PC-3 (cell line): ENCODE measurements at regions of chr2 and their contacts with region 1.

Region 1: GRCh38 chr2:138922973-138923563 is 142.9 kb upstream of the NXPH2 start:
- DNase-seq: peak; percentile 70
- ATAC-seq: peak; percentile 53
- H3K4me3 ChIP-seq: no peak overlapping the region
- H3K27ac ChIP-seq: no peak overlapping the region
- H3K4me1 ChIP-seq: peaks cover 11% of the 10 kb centered on the region; the same call in 1 of the 2 replicates
- H3K27me3 ChIP-seq: no peaks in the 10 kb centered on the region
- CTCF ChIP-seq: peak; percentile 84

Region 2: DNA sequence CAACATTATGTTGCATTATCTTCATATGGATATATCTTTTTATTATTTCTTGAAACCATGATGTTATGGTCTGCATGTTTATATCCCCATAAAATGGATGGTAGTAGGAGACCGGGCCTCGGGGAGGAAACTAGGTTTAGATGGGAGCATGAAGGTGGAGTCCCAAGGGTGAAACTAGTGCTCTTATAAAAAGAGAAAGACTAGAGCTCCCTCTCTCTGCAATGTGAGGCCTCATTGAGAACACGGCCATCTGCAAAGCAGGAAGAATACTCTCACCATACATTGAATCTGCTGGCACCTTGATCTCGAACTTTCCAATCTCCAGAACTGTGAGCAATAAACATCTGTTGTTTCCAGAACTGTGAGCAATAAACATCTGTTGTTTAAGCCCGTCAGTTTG is 206.9 kb before region 1 on chr2:
- CTCF ChIA-PET with region 1: no interaction called
- POLR2A ChIA-PET with region 1: no interaction called
- intact Hi-C with region 1: no loop called
- DNase-seq: peak; percentile 43
- ATAC-seq: peak; percentile 74
- H3K4me3 ChIP-seq: no peak overlapping the region
- H3K27ac ChIP-seq: no peak overlapping the region
- H3K4me1 ChIP-seq: peaks cover 10% of the 10 kb centered on the region
- H3K27me3 ChIP-seq: no peaks in the 10 kb centered on the region
- CTCF ChIP-seq: peak; percentile 51

Region 3: GRCh38 chr2:138948070-138948539 is 25.0 kb after region 1 on chr2:
- CTCF ChIA-PET with region 1: no interaction called
- POLR2A ChIA-PET with region 1: no interaction called
- intact Hi-C with region 1: loop called (anchors 1 kb)
- DNase-seq: peak; percentile 99
- ATAC-seq: peak; percentile 73
- H3K4me3 ChIP-seq: no peak overlapping the region
- H3K27ac ChIP-seq: peak overlapping the region; percentile 97
- H3K4me1 ChIP-seq: peaks cover 44% of the 10 kb centered on the region
- H3K27me3 ChIP-seq: no peaks in the 10 kb centered on the region
- CTCF ChIP-seq: no peak

Region 4: DNA sequence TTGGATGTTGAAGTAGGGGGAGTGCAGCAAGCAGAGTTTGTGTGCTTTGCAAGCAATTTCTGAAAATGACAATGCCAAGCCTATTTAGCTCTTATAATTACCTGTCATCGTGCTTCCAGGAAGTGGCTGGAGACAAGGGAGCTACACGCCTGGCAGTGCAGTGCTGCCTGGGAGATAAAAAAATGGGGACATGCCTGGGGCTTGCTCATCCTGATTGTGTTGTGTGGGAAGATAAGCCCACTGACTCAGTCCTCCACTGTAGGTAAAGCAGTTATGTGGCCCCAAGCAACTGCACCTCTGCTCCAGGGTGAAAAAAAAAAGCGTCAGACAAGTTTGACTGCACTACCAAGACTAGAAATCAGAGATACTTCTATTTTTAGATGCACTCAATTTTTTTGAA is 254.0 kb after region 1 on chr2:
- CTCF ChIA-PET with region 1: no interaction called
- POLR2A ChIA-PET with region 1: no interaction called
- intact Hi-C with region 1: loop called (anchors 1 kb)
- DNase-seq: peak; percentile 7
- ATAC-seq: no peak
- H3K4me3 ChIP-seq: no peak overlapping the region
- H3K27ac ChIP-seq: no peak overlapping the region
- H3K4me1 ChIP-seq: no peaks in the 10 kb centered on the region
- H3K27me3 ChIP-seq: no peaks in the 10 kb centered on the region
- CTCF ChIP-seq: no peak

Region 5: GRCh38 chr2:139518321-139518720 is 595.3 kb after region 1 on chr2:
- CTCF ChIA-PET with region 1: no interaction called
- POLR2A ChIA-PET with region 1: no interaction called
- intact Hi-C with region 1: no loop called
- DNase-seq: no peak
- ATAC-seq: no peak
- H3K4me3 ChIP-seq: no peak overlapping the region
- H3K27ac ChIP-seq: no peak overlapping the region
- H3K4me1 ChIP-seq: no peaks in the 10 kb centered on the region
- H3K27me3 ChIP-seq: no peaks in the 10 kb centered on the region
- CTCF ChIP-seq: no peak

Region 6: GRCh38 chr2:139790807-139791752 is 868.0 kb after region 1 on chr2:
- CTCF ChIA-PET with region 1: no interaction called
- POLR2A ChIA-PET with region 1: no interaction called
- intact Hi-C with region 1: loop called (anchors 5 kb)
- DNase-seq: peak; percentile 69
- ATAC-seq: peak; percentile 87
- H3K4me3 ChIP-seq: no peak overlapping the region
- H3K27ac ChIP-seq: no peak overlapping the region
- H3K4me1 ChIP-seq: no peaks in the 10 kb centered on the region
- H3K27me3 ChIP-seq: no peaks in the 10 kb centered on the region
- CTCF ChIP-seq: peak; percentile 73